ENCODE measurements at regions of chr2 and their contacts with region 1.

Region 1: DNA sequence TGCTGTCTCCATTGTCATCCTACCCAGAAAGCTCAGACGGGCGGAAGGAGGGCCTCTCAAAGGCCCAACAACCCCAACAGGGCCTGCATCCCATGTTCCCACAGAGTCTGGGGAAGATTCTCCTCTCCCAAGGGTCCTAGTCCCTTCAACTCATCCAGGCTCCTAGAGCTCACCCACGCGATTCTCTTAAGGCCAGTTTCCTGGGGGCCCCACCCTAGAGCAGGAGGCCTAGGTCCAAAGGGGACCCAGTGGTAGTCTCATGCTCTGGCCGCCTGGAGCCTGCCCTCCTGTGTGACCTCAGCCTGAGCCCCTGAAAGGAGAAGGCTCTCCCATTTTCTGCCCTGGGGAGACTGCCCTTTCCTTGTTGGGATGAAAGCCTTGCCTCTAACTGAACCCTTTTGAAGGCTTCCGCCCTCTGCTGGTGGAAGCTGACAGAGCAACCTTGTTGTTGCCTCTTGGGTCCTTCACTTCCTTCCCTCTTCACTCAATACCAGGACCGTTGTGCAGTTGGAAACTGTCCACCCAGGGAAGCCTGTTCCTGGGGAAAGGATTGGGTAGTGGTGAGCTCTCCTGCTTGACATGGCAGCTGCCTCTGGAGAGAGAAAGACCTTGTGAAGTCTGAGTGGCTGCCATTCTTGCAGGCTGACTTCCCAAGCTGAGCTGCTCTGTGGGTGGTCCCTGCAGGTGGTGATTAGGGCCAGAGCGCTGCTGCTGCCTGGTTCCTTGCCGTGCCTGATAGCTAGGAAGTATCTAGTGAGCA is 86.0 kb upstream of the ALPP start:
- DNase-seq: peak; percentile 63
- H3K4me3 Mint-ChIP-seq: no peak overlapping the region
- H3K27ac Mint-ChIP-seq: no peak overlapping the region
- H3K4me1 Mint-ChIP-seq: no peaks in the 10 kb centered on the region
- H3K27me3 Mint-ChIP-seq: no peaks in the 10 kb centered on the region
- CTCF ChIP-seq: peak; percentile 66

Region 2: DNA sequence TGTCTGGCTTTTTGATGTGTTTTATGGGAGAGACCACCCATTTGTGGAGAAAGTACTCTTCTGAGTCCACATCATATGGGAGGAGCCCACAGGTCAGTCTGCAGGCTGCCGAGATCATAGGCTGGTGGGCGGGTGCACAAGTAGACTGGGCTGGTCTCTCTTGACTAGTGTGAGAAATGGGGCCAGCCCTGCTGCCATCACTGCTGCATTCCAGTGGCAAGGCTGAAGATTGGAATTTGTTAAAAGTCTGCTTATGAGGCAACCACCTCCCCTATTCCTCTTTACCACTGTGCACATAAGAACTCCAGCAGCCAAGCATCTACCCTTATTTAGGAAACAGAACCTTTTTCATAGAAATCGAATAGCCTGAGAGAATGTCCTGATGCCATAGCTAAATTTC is 130.4 kb before region 1 on chr2:
- CTCF ChIA-PET with region 1: no interaction called
- intact Hi-C with region 1: no loop called
- DNase-seq: no peak
- H3K4me3 Mint-ChIP-seq: no peak overlapping the region
- H3K27ac Mint-ChIP-seq: no peak overlapping the region
- H3K4me1 Mint-ChIP-seq: no peaks in the 10 kb centered on the region
- H3K27me3 Mint-ChIP-seq: no peaks in the 10 kb centered on the region
- CTCF ChIP-seq: no peak

Region 3: DNA sequence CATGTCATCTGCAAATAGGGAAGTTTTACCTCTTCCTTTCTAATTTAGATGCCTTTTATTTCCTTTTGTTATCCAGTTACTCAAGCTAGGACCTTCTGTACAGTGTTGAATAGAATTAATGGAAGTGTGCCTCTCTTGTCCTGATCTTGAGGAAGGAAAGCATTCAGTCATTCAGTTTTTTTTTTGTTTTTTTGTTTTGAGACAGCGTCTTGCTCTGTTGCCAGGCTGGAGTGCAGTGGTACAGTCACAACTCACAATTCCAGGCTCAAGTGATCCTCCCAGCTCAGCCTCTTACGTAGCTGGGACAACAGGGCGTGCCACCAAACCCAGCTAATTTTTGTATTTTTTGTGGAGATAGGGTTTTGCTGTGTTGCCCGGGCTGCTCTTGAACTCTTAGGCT is 117.9 kb before region 1 on chr2:
- CTCF ChIA-PET with region 1: no interaction called
- intact Hi-C with region 1: no loop called
- DNase-seq: no peak
- H3K4me3 Mint-ChIP-seq: no peak overlapping the region
- H3K27ac Mint-ChIP-seq: no peak overlapping the region
- H3K4me1 Mint-ChIP-seq: no peaks in the 10 kb centered on the region
- H3K27me3 Mint-ChIP-seq: no peaks in the 10 kb centered on the region
- CTCF ChIP-seq: no peak

Region 4: GRCh38 chr2:232204457-232204931 is 88.1 kb before region 1 on chr2:
- CTCF ChIA-PET with region 1: interaction called, 12 read pairs
- intact Hi-C with region 1: no loop called
- DNase-seq: no peak
- H3K4me3 Mint-ChIP-seq: no peak overlapping the region
- H3K27ac Mint-ChIP-seq: no peak overlapping the region
- H3K4me1 Mint-ChIP-seq: no peaks in the 10 kb centered on the region
- H3K27me3 Mint-ChIP-seq: no peaks in the 10 kb centered on the region
- CTCF ChIP-seq: no peak